ENCODE measurements at regions of chr19 and their contacts with region 1.

Region 1: DNA sequence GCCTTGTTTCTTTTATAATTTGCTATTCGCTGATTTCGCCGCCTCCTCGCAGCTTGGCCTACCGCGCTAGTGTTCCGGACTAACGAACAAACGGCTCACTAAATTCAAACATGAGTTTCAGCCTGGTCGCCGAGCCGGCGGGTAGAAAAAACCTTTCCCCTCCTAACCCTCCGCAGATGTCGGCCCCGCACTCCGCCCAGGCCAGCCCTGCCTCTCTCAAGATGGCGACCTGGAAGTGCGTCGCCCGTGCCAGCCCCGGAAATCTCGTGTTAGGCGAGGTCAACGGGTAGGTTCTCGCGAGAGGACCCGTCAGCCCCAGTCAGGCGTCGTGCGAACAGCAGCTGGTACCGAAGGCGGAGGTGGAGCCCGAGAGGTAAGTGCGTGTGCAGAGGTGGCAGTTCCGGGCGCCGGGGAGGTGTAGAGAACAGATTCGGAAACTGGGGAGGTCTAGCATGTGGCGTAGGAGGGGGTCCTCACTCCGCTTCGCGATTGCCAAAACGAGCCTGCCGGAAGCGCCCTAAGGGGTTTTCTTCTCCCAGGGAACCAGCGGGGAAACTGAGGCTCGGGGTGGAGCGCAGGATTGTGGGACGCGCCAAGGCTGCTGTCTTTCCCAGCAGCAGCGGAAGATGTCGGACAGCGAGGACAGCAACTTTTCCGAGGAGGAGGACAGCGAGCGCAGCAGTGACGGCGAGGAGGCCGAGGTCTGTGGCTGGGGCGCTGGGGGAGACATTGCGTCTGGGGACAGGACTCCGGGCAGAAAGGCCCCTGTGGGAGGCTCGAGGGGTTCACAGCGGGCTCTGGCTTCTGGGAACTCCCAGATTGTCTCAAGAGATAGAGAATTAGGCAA is at the start of gene SUPT5H:
- DNase-seq: peak; percentile 97 to 99 (median 98)
- H3K4me3 ChIP-seq: peak within 1 kb of the TSS; percentile 89
- H3K4me3 Mint-ChIP-seq: peak within 1 kb of the TSS; percentile 93 to 100 (median 99)
- H3K27ac ChIP-seq: peak within 1 kb of the TSS; percentile 95
- H3K27ac Mint-ChIP-seq: peak within 1 kb of the TSS; percentile 93 to 100 (median 100)
- H3K4me1 ChIP-seq: peaks cover 48% of the 10 kb centered on the region
- H3K4me1 Mint-ChIP-seq: peaks cover 50 to 60% (median 59%) of the 10 kb centered on the region in 3 donors
- H3K27me3 ChIP-seq: no peaks in the 10 kb centered on the region
- H3K27me3 Mint-ChIP-seq: no peaks in the 10 kb centered on the region
- total RNA-seq, gene SUPT5H: 190 to 196 TPM

Region 2: DNA sequence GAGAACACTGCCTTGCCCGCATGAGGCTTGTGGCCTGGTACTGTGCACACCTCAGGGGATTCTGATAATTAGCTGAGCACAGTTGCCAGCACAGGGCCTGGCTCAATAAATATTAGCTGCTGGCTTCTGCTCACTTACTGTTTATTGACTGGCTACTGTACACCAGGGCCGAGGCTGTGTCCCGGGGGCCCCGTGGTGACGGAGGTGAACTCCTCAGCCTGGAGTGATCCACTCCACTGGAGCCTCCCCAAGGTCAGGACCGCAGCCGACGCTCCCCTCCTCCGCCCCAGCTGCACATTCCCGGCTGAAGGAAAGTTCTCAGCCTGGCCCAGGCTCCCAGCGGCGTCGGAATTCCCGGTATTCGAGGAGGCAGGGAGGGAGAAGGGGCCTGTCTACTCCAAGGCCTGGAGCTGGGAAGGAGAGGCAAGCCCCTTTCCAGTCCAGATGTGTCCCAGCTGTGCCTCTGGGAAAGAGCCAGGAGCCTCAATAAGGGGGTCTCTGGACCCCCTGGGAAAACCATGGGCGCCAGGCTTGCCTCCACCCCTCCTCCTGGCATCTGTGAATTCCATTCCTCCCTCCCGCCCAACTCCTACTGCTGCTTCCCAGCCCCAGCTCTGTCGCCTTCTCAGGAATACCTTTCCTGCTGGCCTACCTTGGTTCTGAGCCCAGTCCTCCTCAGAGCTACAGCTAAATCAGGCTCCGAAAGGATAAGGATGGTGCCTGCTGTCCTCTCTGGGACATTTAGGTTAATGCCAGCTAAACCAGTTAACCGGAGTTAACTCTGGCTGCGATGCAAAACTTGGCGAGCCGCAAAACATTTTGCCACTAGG is 17.0 kb before region 1 on chr19:
- CTCF ChIA-PET with region 1: no interaction called
- POLR2A ChIA-PET with region 1: interaction called, 11 read pairs
- DNase-seq: no peak
- H3K4me3 ChIP-seq: no peak overlapping the region
- H3K4me3 Mint-ChIP-seq: no peak overlapping the region
- H3K27ac ChIP-seq: no peak overlapping the region
- H3K27ac Mint-ChIP-seq: peak overlapping the region in 1 of 8 donors; percentile 94
- H3K4me1 ChIP-seq: peaks cover 1% of the 10 kb centered on the region
- H3K4me1 Mint-ChIP-seq: peaks cover 12 to 25% (median 12%) of the 10 kb centered on the region in 3 donors
- H3K27me3 ChIP-seq: no peaks in the 10 kb centered on the region
- H3K27me3 Mint-ChIP-seq: peaks cover 0 to 2% of the 10 kb centered on the region in 2 donors

Region 3: GRCh38 chr19:39502640-39503417 is 57.3 kb after region 1 on chr19:
- CTCF ChIA-PET with region 1: interaction called, 11 read pairs
- POLR2A ChIA-PET with region 1: interaction called, 6 read pairs
- DNase-seq: peak; percentile 68 to 82 (median 75)
- H3K4me3 ChIP-seq: no peak overlapping the region
- H3K4me3 Mint-ChIP-seq: peak overlapping the region in 2 of 7 donors; percentile 46 to 52
- H3K27ac ChIP-seq: no peak overlapping the region
- H3K27ac Mint-ChIP-seq: peak overlapping the region in 4 of 8 donors; percentile 38 to 66 (median 52)
- H3K4me1 ChIP-seq: peaks cover 25% of the 10 kb centered on the region
- H3K4me1 Mint-ChIP-seq: peaks cover 26 to 41% (median 30%) of the 10 kb centered on the region in 3 donors
- H3K27me3 ChIP-seq: peaks cover 31% of the 10 kb centered on the region
- H3K27me3 Mint-ChIP-seq: peaks cover 50 to 72% of the 10 kb centered on the region in 2 donors